WTC11 (cell line): ENCODE measurements at regions of chr4 and their contacts with region 1.

Region 1: DNA sequence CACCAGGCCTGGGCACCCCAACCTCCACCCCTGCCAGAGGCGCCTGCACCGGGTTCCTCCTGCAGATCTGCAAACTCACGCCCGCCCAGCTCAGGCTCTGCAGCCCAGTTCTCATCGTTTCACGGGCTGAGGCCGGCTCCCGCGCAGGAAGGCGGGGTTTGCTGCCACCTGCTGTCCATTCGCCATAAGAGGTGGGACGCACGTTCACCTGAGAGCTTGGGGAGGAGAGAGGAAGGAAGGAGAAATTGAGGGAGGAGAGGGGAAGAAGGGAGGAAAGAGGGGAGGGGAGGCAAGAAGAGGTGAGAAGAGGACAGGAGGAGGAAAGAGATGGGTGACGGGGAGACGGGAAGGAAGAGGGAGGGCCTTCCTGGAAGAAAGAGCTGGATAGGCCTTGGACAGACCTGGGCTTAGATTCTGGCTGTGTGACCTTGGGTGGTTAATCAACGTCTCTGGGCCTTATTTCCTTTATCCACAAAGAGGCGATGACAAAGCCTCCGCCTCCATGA is 114.5 kb downstream of the ADRA2C start:
- DNase-seq: peak; percentile 93
- ATAC-seq: peak; percentile 93
- H3K4me3 Mint-ChIP-seq: peak overlapping the region; percentile 45
- H3K27ac Mint-ChIP-seq: no peak overlapping the region
- H3K4me1 Mint-ChIP-seq: peaks cover 16% of the 10 kb centered on the region
- H3K27me3 Mint-ChIP-seq: peaks cover 34% of the 10 kb centered on the region
- CTCF ChIP-seq: peak; percentile 57

Region 2: DNA sequence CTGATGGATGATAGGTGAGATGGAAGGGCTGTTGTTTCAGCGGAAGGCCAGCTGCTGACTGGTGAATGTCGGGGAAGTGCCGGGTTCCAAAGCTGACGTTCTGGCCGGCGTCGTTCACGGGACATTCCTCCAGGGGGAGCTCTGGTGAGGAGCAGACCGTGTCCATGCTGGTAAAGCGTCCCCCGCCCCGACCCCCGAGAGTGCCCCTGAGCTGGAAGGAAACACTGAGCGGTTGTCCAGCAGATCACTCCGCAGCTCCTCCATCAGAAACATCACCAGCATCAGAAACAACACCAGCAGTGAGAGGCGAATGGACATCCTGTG is 133.1 kb before region 1 on chr4:
- CTCF ChIA-PET with region 1: interaction called, 30 read pairs
- POLR2A ChIA-PET with region 1: no interaction called
- DNase-seq: peak; percentile 87
- ATAC-seq: peak; percentile 78
- H3K4me3 Mint-ChIP-seq: no peak overlapping the region
- H3K27ac Mint-ChIP-seq: no peak overlapping the region
- H3K4me1 Mint-ChIP-seq: peaks cover 36% of the 10 kb centered on the region
- H3K27me3 Mint-ChIP-seq: peaks cover 13% of the 10 kb centered on the region
- CTCF ChIP-seq: peak; percentile 37; the same call in 1 of the 2 replicates

Region 3: GRCh38 chr4:3791978-3792542 is 88.6 kb before region 1 on chr4:
- CTCF ChIA-PET with region 1: interaction called, 115 read pairs
- POLR2A ChIA-PET with region 1: interaction called, 3 read pairs
- DNase-seq: peak; percentile 92
- ATAC-seq: peak; percentile 77
- H3K4me3 Mint-ChIP-seq: no peak overlapping the region
- H3K27ac Mint-ChIP-seq: no peak overlapping the region; the same call in 1 of the 2 replicates
- H3K4me1 Mint-ChIP-seq: peaks cover 7% of the 10 kb centered on the region
- H3K27me3 Mint-ChIP-seq: peaks cover 7% of the 10 kb centered on the region
- CTCF ChIP-seq: no peak

Region 4: DNA sequence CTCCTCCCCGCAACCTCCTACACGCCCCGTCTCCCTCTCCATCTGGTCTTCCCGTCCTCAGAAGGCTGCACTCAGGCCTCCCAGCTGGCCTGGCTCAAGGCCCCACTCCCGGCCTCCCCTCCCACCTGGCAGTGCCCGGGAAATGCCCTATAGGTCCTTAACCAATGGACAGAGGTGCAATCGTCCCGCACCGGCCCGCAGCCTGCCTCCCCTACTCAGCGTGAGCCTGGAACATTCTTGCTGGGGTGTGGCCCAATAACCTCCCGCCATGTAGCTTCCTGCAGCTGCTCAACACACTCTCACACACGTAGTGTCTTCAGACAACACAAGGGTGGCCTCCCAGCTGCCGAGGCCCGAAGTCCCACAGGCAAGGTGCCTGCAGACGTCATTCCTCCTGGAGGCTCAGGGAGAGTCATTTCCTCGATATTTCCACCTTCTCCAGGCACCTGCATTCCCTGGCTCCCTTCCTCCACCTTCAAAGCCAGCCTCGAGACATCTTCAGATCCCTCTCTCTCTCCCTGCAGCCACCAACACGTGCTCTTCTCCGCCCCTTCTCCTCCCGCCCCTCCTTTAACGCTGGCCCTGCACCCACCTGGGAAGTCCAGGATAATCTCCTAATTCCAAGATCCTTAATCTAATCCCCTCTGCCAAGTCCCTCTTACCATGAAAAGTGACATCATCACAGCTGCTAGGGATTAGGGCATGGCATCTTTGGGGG is 58.3 kb before region 1 on chr4:
- CTCF ChIA-PET with region 1: interaction called, 20 read pairs
- POLR2A ChIA-PET with region 1: no interaction called
- DNase-seq: no peak
- ATAC-seq: peak; percentile 25; the same call in 1 of the 2 replicates
- H3K4me3 Mint-ChIP-seq: no peak overlapping the region
- H3K27ac Mint-ChIP-seq: no peak overlapping the region
- H3K4me1 Mint-ChIP-seq: peaks cover 15% of the 10 kb centered on the region
- H3K27me3 Mint-ChIP-seq: peaks cover 2% of the 10 kb centered on the region; the same call in 1 of the 2 replicates
- CTCF ChIP-seq: no peak

Region 5: GRCh38 chr4:3851211-3851610 is 29.5 kb before region 1 on chr4:
- CTCF ChIA-PET with region 1: interaction called, 12 read pairs
- POLR2A ChIA-PET with region 1: no interaction called
- DNase-seq: peak; percentile 63
- ATAC-seq: peak; percentile 70
- H3K4me3 Mint-ChIP-seq: no peak overlapping the region
- H3K27ac Mint-ChIP-seq: peak overlapping the region; percentile 22
- H3K4me1 Mint-ChIP-seq: peaks cover 51% of the 10 kb centered on the region
- H3K27me3 Mint-ChIP-seq: peaks cover 27% of the 10 kb centered on the region
- CTCF ChIP-seq: no peak

Region 6: DNA sequence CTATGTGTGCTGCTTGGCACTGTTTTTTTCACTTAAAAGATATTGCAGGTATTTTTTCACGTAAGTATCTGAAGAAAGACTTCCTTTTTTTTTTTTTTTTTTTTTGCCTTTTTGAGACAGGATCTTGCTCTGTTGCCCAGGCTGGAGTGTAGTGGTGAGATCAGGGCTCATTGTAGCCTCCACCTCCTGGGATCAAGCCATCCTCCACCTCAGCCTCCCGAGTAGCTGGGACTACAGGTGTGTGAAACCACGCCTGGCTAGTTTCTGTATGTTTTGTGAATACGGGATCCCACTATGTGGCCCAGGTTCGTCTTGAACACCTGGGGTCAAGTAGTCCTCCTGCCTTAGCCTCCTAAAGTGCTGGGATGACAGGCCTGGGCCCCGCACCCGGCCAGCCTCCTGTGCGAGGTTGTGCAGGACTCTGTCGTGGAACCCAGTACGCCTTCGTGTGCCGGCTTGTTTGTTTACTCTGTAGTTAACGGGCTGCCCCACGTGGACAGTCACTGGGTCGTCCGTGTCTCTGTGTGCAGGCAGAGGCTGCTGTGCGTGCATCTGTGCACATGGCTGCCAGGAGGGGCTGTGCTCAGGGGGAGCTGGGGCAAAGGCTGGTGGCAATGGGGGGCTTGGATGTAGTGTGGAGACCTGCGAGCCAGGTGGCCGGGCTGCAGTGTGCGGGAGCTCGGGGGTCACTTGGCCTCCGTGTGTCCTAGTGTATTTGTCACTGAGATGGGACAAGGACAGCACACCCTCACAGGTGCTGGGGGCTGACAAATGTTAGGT is 65.0 kb after region 1 on chr4:
- CTCF ChIA-PET with region 1: interaction called, 13 read pairs
- POLR2A ChIA-PET with region 1: no interaction called
- DNase-seq: no peak
- ATAC-seq: no peak
- H3K4me3 Mint-ChIP-seq: no peak overlapping the region
- H3K27ac Mint-ChIP-seq: no peak overlapping the region
- H3K4me1 Mint-ChIP-seq: peaks cover 18% of the 10 kb centered on the region
- H3K27me3 Mint-ChIP-seq: no peaks in the 10 kb centered on the region
- CTCF ChIP-seq: no peak